ENCODE measurements at regions of chr20 and their contacts with region 1.

Region 1: DNA sequence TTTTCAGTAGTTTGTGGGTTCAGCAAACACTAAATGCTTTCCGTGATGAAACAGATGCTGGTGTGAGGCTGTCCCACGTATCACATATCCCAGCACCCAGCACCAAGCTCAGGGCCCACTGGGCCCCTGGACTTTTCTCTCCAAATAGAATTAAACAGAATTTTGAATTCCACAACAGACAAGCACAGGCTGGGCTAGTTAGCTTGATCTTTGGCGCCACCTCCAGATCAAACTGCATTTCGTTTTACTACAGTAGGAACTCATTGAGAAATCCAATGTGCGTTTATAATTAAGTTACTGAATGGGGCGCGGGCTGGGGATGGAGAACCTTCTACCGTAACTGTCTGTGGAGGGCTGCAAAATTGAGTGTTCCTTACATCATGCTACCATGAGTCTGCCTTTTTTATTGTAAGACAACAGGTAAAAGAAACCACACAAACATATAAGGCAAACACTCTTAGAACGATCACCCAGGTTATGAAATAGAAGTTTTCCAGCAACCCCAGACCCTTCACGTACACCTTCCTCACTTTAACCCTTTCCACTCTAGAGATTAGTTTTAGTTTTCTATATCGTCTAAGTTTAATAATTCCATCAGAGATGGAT is 107.8 kb downstream of the ZFP64 start:
- DNase-seq: peak; percentile 69

Region 2: DNA sequence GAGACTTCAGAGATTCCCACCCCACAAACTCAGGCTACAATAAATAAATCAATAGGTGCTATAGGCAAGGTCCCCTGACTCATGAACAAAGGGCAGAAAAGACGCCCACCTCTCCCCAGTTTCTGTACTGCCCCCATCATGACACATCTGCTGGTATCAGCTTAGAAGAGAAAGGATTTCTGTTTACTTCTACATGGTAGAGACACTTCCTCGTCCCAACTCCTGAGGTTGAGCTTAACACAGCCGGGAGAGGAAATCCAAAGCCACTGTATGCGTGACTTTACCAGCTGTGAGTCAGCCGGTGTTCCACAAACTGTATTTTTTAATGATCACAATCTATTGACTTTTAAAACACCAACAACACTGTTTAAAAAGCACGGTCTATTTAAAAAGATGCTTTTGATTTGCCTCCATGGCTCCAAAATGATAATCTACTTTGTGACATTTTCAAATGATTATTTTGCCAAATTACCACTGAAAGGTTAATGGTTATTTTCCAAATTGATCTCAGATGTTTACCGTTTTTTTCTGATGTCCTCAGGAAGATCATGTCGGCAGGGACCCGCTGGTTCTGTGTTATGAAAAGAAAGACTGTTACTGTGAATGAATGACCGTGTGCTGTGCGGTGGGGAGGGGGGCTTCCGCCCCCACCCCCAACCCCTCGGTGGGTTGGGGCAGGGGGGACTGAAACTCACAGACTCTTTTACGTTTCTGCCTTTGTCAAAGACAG is 388.0 kb before region 1 on chr20:
- intact Hi-C with region 1: loop called in 1 of 2 experiments (anchors 10 kb)
- DNase-seq: no peak

Region 3: GRCh38 chr20:52104546-52105441 is 21.1 kb after region 1 on chr20:
- intact Hi-C with region 1: no loop called
- DNase-seq: no peak